ENCODE measurements at regions of chr5 and their contacts with region 1.

Region 1: DNA sequence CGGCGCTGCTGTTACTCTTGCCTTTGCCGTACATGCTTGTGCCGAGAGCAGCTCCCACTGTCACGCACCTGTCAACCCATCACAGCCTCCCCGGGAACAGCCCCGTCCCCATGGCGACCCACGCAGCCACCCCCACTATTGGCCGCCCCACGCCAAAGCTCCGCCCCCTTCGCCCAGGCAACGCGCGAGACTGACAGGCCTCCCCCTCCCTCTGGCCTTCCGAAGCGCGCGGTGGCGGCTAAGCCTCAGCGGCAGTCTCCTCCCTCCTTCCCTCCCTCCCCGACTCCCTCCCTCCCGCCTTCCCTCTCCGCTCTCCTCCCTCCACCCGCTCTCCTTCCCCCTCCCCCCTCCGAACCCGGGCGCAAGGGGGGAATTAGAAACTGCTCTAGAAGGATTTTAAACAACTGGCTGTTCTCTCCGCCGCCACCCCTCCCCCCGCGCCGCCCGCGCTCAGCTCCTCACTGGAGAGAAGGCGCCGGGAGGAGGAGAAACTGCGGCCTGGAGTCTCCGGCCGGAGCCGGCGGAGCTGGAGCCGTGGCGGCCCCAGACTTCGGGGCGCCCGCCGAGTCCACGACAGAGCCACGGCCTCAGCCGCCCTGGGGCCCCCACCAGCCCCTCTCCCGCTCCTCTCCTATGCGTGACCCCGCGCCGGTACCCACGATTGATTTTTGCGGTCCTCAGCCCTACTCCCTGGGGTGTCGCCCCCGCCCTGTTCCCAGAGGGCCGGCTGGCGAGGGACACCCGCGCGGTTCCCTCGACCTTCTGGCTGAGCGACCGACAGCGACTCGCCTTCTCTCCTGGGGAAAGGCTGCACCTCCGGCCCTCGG is at the start of gene SSBP2:
- DNase-seq: peak; percentile 99
- H3K4me3 Mint-ChIP-seq: peak within 1 kb of the TSS; percentile 90
- H3K27ac Mint-ChIP-seq: peak within 1 kb of the TSS; percentile 89
- H3K4me1 Mint-ChIP-seq: peaks cover 51% of the 10 kb centered on the region
- H3K27me3 Mint-ChIP-seq: no peaks in the 10 kb centered on the region
- CTCF ChIP-seq: no peak
- total RNA-seq, gene SSBP2: 36.0 and 52.7 TPM in 2 replicates

Region 2: DNA sequence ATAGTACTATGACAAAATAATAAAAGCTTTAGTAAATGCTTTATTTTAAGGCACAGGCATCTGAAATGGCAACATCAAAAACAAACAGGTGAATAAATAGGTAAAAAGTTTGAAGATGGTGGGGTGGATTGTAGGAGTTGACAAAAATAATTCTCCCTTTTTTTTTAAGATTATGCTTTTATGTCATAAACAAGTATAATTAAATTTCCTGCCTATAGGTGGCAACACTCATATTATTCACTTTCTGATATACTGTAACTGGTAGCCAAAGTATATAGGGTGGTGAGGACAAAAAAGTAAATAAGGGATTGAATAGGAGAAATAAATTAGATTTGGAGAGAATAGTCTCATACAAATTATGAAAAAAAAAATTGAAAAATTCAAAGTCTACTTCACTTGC is 237.2 kb before region 1 on chr5:
- CTCF ChIA-PET with region 1: no interaction called
- POLR2A ChIA-PET with region 1: interaction called, 4 read pairs
- intact Hi-C with region 1: loop called (anchors 2 kb)
- DNase-seq: peak; percentile 20
- H3K4me3 Mint-ChIP-seq: no peak overlapping the region
- H3K27ac Mint-ChIP-seq: no peak overlapping the region
- H3K4me1 Mint-ChIP-seq: no peaks in the 10 kb centered on the region
- H3K27me3 Mint-ChIP-seq: no peaks in the 10 kb centered on the region
- CTCF ChIP-seq: peak; percentile 35

Region 3: GRCh38 chr5:81779125-81779915 is 28.1 kb after region 1 on chr5:
- CTCF ChIA-PET with region 1: interaction called, 8 read pairs
- POLR2A ChIA-PET with region 1: interaction called, 87 read pairs
- intact Hi-C with region 1: no loop called
- DNase-seq: peak; percentile 16
- H3K4me3 Mint-ChIP-seq: peak overlapping the region; percentile 38
- H3K27ac Mint-ChIP-seq: peak overlapping the region; percentile 81
- H3K4me1 Mint-ChIP-seq: peaks cover 18% of the 10 kb centered on the region
- H3K27me3 Mint-ChIP-seq: no peaks in the 10 kb centered on the region
- CTCF ChIP-seq: no peak

Region 4: DNA sequence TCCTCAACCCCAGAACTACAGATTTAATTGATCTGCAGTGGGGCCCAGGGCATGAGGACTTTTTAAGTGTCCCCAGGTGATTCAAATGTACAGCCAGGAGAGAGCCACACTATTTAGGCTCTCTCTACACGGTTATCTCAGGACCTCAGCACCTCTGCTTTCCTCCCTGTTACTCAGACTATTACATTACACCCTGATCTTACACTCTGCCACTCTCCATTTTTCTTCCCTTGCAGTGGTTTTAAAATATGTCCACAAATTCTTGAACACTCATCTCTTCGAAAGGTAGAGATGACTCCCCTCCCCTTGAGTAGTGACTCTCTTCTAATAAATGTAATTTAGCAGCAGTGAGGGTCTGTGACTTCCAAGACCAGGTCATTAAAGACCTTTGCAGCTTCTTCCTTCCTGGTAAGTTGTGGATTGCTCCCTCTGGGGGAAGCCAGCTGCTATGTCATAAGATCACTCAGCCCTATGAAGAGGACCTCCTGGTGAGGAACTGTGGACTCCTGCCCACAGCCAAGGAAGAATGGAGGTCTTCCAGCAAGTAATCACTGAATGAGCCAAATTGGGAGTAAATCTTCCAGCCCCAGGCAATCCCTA is 87.2 kb after region 1 on chr5:
- CTCF ChIA-PET with region 1: no interaction called
- POLR2A ChIA-PET with region 1: interaction called, 8 read pairs
- intact Hi-C with region 1: loop called (anchors 1 kb)
- DNase-seq: peak; percentile 48
- H3K4me3 Mint-ChIP-seq: no peak overlapping the region
- H3K27ac Mint-ChIP-seq: no peak overlapping the region
- H3K4me1 Mint-ChIP-seq: peaks cover 16% of the 10 kb centered on the region
- H3K27me3 Mint-ChIP-seq: no peaks in the 10 kb centered on the region
- CTCF ChIP-seq: peak; percentile 33

Region 5: GRCh38 chr5:81971712-81972495 is 220.7 kb after region 1 on chr5 and contains the start of gene ATG10:
- CTCF ChIA-PET with region 1: no interaction called
- POLR2A ChIA-PET with region 1: interaction called, 10 read pairs
- intact Hi-C with region 1: loop called (anchors 5 kb)
- DNase-seq: peak; percentile 86
- H3K4me3 Mint-ChIP-seq: peak within 1 kb of the TSS; percentile 95
- H3K27ac Mint-ChIP-seq: peak within 1 kb of the TSS; percentile 96
- H3K4me1 Mint-ChIP-seq: peaks cover 19% of the 10 kb centered on the region
- H3K27me3 Mint-ChIP-seq: no peaks in the 10 kb centered on the region
- CTCF ChIP-seq: no peak
- total RNA-seq, gene ATG10: 9.9 and 11.1 TPM in 2 replicates

Region 6: GRCh38 chr5:82165740-82166530 is 414.7 kb after region 1 on chr5:
- CTCF ChIA-PET with region 1: interaction called, 13 read pairs
- POLR2A ChIA-PET with region 1: interaction called, 44 read pairs
- intact Hi-C with region 1: loop called (anchors 1 kb)
- DNase-seq: peak; percentile 94
- H3K4me3 Mint-ChIP-seq: no peak overlapping the region
- H3K27ac Mint-ChIP-seq: peak overlapping the region; percentile 88
- H3K4me1 Mint-ChIP-seq: peaks cover 41% of the 10 kb centered on the region
- H3K27me3 Mint-ChIP-seq: no peaks in the 10 kb centered on the region
- CTCF ChIP-seq: peak; percentile 89

Region 7: DNA sequence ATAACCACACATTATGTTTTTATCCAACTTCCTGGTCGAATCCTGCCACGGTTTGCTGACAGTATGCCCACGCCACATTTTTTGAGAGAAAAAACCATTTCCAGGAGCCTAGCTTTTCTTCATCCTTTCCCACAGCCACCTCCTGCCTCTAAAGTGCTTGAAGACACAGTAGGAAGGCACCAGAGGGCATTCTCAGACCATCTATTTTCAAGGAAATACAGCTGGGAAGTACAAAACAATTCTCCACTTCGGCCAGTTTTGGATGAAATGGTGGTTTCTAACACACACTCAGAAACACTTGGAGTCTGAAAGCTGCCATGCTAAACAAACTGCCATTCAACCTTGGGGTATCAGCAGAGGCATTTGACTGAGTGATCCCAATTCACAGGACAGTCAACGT is 613.3 kb after region 1 on chr5:
- CTCF ChIA-PET with region 1: no interaction called
- POLR2A ChIA-PET with region 1: no interaction called
- intact Hi-C with region 1: no loop called
- DNase-seq: peak; percentile 73
- H3K4me3 Mint-ChIP-seq: no peak overlapping the region
- H3K27ac Mint-ChIP-seq: no peak overlapping the region
- H3K4me1 Mint-ChIP-seq: peaks cover 31% of the 10 kb centered on the region
- H3K27me3 Mint-ChIP-seq: no peaks in the 10 kb centered on the region
- CTCF ChIP-seq: peak; percentile 54

Measured in MCF 10A (cell line).